Mammary epithelial cell (primary cell): ENCODE measurements at regions of chr21 and their contacts with region 1.

Region 1: DNA sequence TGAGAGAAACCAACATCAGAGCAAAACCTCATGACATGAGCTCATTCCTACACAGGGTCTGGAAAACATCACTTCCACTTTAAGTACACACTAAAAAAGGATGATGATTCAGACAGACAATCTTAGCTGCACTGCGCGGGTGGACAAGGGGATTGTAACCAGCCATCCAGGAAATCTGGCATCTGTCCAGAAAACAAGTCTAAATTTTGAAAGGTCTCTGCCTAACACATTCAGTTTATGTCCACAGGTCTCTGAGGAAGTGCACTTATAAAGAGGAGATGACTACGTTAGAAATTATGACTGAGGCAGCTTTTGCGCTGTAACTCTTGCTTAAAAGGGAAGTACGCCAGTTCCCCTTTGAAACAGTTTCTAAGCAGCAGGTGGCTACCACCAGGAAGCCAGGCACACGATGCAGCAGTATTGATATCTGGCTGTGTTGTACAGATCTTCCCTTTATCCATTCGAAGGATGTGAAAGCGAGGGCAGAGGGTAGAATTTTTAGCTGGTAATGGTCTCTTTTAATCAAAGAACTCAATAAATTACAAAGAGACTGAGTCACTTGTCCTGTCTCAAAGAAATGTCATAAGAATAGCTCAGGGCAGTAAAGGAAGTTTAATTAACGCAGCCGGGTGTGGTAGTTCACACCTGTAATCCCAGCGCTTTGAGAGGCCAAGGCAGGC is 128.0 kb downstream of the SETD4 start:
- DNase-seq: peak; percentile 92
- H3K4me3 ChIP-seq: no peak overlapping the region
- H3K27ac ChIP-seq: peak overlapping the region; percentile 46
- H3K4me1 ChIP-seq: peaks cover 19% of the 10 kb centered on the region
- H3K27me3 ChIP-seq: no peaks in the 10 kb centered on the region
- CTCF ChIP-seq: no peak

Region 2: DNA sequence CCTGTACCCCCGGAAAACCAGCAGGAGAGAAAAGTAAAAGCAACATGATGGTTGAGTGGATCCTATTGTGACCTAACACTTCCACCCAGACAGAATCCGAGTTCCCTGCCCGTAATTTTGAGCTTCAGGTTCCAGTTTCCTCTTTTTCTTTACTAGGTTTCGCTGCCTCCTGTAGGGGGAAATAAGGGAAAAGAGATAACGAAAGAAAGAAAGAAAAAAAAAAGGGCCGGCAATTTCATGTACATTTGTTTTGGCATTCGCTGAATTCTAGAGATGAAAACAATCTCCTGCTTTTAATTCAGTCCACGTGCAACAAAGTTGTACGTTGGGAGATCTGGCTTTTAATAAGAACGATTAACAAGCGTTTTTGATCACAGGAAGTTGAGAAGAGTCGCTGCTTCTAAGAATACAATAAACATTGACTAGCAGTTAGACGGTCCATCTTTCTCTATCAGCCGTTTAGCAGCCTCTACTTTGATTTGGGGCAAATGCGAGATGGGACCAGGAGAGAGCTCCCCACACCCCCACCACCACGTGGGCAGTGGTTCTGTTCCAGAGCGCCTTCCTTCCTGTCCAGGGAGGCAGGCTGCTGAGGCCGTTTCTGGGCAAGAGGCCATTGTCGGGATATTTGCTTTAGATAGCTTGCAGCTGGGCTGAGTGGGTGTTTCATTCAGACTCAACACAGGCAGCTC is 727.4 kb before region 1 on chr21:
- CTCF ChIA-PET with region 1: no interaction called
- dilution Hi-C with region 1: no loop called
- in situ Hi-C with region 1: loop called in 1 of 2 experiments (anchors 25 kb)
- intact Hi-C with region 1: no loop called
- DNase-seq: no peak
- H3K4me3 ChIP-seq: no peak overlapping the region
- H3K27ac ChIP-seq: no peak overlapping the region
- H3K4me1 ChIP-seq: peaks cover 18% of the 10 kb centered on the region
- H3K27me3 ChIP-seq: no peaks in the 10 kb centered on the region
- CTCF ChIP-seq: no peak

Region 3: DNA sequence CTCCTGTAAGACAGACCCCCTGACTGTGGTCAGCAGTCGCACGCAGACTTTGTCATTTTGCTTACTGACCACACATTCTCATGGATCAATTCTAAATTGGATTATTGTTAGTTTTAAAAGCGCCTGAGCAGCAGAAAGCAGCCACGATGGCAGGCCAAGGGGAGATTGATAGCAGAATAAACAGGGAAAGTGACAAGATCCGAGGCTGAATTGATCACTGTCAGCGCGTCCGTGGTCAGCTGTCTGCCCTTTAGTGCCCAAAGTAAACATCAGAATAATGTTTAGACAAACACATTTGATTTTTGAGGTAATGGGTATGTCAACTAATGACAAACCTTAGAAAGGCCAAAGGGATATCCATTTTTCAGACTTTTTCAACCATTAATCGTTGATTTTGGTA is 298.9 kb before region 1 on chr21:
- CTCF ChIA-PET with region 1: no interaction called
- dilution Hi-C with region 1: no loop called
- in situ Hi-C with region 1: no loop called
- intact Hi-C with region 1: no loop called
- DNase-seq: no peak
- H3K4me3 ChIP-seq: no peak overlapping the region
- H3K27ac ChIP-seq: no peak overlapping the region
- H3K4me1 ChIP-seq: peaks cover 26% of the 10 kb centered on the region
- H3K27me3 ChIP-seq: no peaks in the 10 kb centered on the region
- CTCF ChIP-seq: no peak

Region 4: DNA sequence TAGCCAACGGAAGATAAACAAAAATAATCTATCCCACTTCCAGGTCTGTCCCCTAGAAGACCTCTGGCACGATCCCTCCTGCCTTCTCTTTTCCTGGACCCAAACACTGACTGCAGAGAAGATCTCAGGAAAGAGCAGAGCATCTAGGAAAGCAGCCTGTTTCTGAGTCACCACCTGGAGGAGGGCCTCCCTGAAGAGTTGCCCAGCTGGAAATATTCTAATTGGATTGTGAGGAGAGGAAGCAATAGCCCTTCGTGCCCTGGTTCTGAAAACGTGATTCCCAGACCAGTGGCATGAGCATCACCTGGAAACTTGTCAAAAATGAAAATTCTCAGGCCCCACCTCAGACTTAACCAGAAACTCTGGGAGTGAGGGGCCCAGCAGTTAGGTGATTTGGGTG is 283.2 kb before region 1 on chr21:
- CTCF ChIA-PET with region 1: no interaction called
- dilution Hi-C with region 1: no loop called
- in situ Hi-C with region 1: no loop called
- intact Hi-C with region 1: loop called (anchors 10 kb)
- DNase-seq: peak; percentile 36
- H3K4me3 ChIP-seq: no peak overlapping the region
- H3K27ac ChIP-seq: no peak overlapping the region
- H3K4me1 ChIP-seq: peaks cover 8% of the 10 kb centered on the region
- H3K27me3 ChIP-seq: no peaks in the 10 kb centered on the region
- CTCF ChIP-seq: no peak

Region 5: GRCh38 chr21:35861661-35862060 is 70.7 kb before region 1 on chr21:
- CTCF ChIA-PET with region 1: no interaction called
- dilution Hi-C with region 1: no loop called
- in situ Hi-C with region 1: no loop called
- intact Hi-C with region 1: no loop called
- DNase-seq: no peak
- H3K4me3 ChIP-seq: no peak overlapping the region
- H3K27ac ChIP-seq: no peak overlapping the region
- H3K4me1 ChIP-seq: no peaks in the 10 kb centered on the region
- H3K27me3 ChIP-seq: no peaks in the 10 kb centered on the region
- CTCF ChIP-seq: no peak

Region 6: GRCh38 chr21:35942211-35943144 is 10.1 kb after region 1 on chr21:
- CTCF ChIA-PET with region 1: no interaction called
- dilution Hi-C with region 1: no loop called
- in situ Hi-C with region 1: no loop called
- intact Hi-C with region 1: no loop called
- DNase-seq: no peak
- H3K4me3 ChIP-seq: no peak overlapping the region
- H3K27ac ChIP-seq: no peak overlapping the region
- H3K4me1 ChIP-seq: no peaks in the 10 kb centered on the region
- H3K27me3 ChIP-seq: no peaks in the 10 kb centered on the region
- CTCF ChIP-seq: no peak